Panc1 (cell line): ENCODE measurements at regions of chr3 and their contacts with region 1.

Region 1: GRCh38 chr3:37030588-37030987 is 37.3 kb downstream of the MLH1 start:
- DNase-seq: no peak
- ATAC-seq: no peak
- H3K4me3 ChIP-seq: no peak overlapping the region
- H3K27ac ChIP-seq: no peak overlapping the region
- H3K4me1 ChIP-seq: no peaks in the 10 kb centered on the region
- H3K27me3 ChIP-seq: no peaks in the 10 kb centered on the region
- CTCF ChIP-seq: no peak

Region 2: GRCh38 chr3:36494461-36495109 is 536.0 kb before region 1 on chr3:
- CTCF ChIA-PET with region 1: no interaction called
- POLR2A ChIA-PET with region 1: interaction called, 10 read pairs
- in situ Hi-C with region 1: no loop called
- intact Hi-C with region 1: no loop called
- DNase-seq: no peak
- ATAC-seq: no peak
- H3K4me3 ChIP-seq: no peak overlapping the region
- H3K27ac ChIP-seq: no peak overlapping the region
- H3K4me1 ChIP-seq: no peaks in the 10 kb centered on the region
- H3K27me3 ChIP-seq: no peaks in the 10 kb centered on the region
- CTCF ChIP-seq: no peak

Region 3: GRCh38 chr3:37272743-37273142 is 242.2 kb after region 1 on chr3:
- CTCF ChIA-PET with region 1: no interaction called
- POLR2A ChIA-PET with region 1: interaction called, 12 read pairs
- in situ Hi-C with region 1: no loop called
- intact Hi-C with region 1: no loop called
- DNase-seq: no peak
- ATAC-seq: no peak
- H3K4me3 ChIP-seq: no peak overlapping the region
- H3K27ac ChIP-seq: no peak overlapping the region
- H3K4me1 ChIP-seq: no peaks in the 10 kb centered on the region
- H3K27me3 ChIP-seq: no peaks in the 10 kb centered on the region
- CTCF ChIP-seq: no peak